ENCODE measurements at regions of chr3 and their contacts with region 1.

Region 1: DNA sequence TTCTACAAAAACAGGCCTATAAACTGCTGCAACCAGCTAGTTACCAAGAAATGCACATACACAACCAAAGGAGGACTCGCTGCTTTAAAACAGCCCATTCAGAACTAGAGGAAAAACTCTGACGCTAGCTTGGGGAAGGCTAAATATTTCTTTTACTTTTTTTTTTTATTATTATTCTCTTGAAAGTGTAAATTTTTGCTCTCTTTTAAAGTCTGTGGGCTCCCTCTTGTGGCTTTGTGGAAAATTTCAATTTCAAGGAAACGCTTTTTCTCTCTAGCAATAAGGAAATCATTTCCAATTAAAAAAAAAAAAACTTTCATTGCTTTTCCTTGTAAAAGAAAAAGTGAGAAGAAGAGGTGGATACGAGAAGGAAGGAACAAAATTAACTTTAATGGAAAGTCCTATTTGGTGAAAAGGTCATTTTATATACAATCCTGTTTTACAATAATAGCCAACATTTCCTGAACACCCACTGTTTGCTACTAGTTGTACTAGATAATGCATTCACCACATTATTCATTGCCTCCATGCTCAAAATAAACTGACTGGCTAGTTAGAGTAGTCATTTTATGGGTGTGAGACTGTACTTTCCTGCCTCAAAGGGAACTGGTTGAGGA is 51.2 kb upstream of the SAMMSON start:
- DNase-seq: peak in 1 of 2 experiments; percentile 15
- H3K4me3 ChIP-seq: no peak overlapping the region
- H3K4me3 Mint-ChIP-seq: no peak overlapping the region
- H3K27ac Mint-ChIP-seq: no peak overlapping the region
- H3K4me1 ChIP-seq: no peaks in the 10 kb centered on the region
- H3K4me1 Mint-ChIP-seq: no peaks in the 10 kb centered on the region
- H3K27me3 ChIP-seq: no peaks in the 10 kb centered on the region
- H3K27me3 Mint-ChIP-seq: no peaks in the 10 kb centered on the region
- CTCF ChIP-seq: peak; percentile 51 to 55

Region 2: DNA sequence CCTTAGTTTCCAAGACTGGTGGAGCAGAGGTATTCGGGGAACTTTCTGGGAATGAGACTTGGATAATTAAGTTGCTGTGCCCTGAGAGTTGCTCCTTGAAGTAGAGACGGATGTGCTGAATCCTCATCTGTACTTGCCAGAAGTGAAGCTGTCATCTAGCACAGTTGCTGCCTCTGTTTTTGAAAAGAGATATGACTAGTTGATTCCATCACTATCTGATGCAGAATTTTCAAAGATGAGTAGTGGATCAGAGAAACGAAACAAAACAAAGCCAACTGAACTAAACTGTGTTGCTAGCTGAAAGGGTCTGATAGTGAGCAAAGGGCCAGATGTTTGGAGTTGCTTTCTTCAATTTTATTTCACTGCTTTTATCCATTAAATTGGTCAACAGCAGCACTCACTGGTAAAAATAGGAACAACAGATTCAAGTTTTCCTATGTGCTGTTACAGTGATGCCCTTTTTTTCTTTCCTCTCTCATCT is 156.4 kb before region 1 on chr3:
- CTCF ChIA-PET with region 1: no interaction called
- POLR2A ChIA-PET with region 1: no interaction called
- intact Hi-C with region 1: loop called (anchors 10 kb)
- DNase-seq: peak in 1 of 2 experiments; percentile 5
- H3K4me3 ChIP-seq: no peak overlapping the region
- H3K4me3 Mint-ChIP-seq: no peak overlapping the region
- H3K27ac Mint-ChIP-seq: no peak overlapping the region
- H3K4me1 ChIP-seq: peaks cover 6% of the 10 kb centered on the region; the same call in 1 of the 2 replicates
- H3K4me1 Mint-ChIP-seq: peaks cover 6% of the 10 kb centered on the region
- H3K27me3 ChIP-seq: no peaks in the 10 kb centered on the region
- H3K27me3 Mint-ChIP-seq: no peaks in the 10 kb centered on the region
- CTCF ChIP-seq: peak; percentile 24 to 35

Region 3: GRCh38 chr3:69986419-69986818 is 38.1 kb after region 1 on chr3:
- CTCF ChIA-PET with region 1: no interaction called
- POLR2A ChIA-PET with region 1: no interaction called
- intact Hi-C with region 1: no loop called
- DNase-seq: no peak
- H3K4me3 ChIP-seq: no peak overlapping the region
- H3K4me3 Mint-ChIP-seq: no peak overlapping the region
- H3K27ac Mint-ChIP-seq: no peak overlapping the region
- H3K4me1 ChIP-seq: no peaks in the 10 kb centered on the region
- H3K4me1 Mint-ChIP-seq: no peaks in the 10 kb centered on the region
- H3K27me3 ChIP-seq: no peaks in the 10 kb centered on the region
- H3K27me3 Mint-ChIP-seq: peaks cover 4% of the 10 kb centered on the region
- CTCF ChIP-seq: no peak